ENCODE measurements at regions of chr1 and their contacts with region 1.

Region 1: DNA sequence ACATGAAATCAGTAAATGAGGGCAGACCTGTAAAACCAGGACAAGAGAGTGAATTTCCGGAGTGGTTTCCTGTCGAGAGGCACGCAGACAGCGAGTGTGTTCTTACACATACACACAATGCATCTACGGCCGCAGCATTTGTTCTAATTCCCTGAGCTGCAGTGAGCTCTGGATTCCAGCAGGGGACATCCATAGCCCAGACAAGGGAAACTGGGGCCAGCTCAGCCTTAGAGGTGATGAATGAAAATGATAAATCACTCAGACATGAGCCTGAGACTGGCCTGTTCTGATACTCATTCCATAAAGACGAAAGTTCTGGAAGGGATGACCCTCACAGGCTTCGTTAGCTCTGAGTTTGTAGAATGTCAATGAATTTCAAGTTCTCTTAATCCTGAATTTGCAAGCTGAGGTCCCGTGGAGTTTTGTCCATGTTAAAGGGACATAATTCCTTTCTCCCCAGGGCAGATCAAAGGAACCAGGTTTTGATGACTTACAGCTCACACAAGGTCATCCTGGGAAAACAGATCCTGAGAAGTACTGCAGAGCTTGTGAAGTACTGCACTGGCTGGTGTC is 207.9 kb upstream of the C1orf87 start:
- DNase-seq: no peak
- H3K4me3 ChIP-seq: no peak overlapping the region
- H3K27ac ChIP-seq: no peak overlapping the region
- H3K27me3 ChIP-seq: no peaks in the 10 kb centered on the region
- CTCF ChIP-seq: peak; percentile 87

Region 2: DNA sequence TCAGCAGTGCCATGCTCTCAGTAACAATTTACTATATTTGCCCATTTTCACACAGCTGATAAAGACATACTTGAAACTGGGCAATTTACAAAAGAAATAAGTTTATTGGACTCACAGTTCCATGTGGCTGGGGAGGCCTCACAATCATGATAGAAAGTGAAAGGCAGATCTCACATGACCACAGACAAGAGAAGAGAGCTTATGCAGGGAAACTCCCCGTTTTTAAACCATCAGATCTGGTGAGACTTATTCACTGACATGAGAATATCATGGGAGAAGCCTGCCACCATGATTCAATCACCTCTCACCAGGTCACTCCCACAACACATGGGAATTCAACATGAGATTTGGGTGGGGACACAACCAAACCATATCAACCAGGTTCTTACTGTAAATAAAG is 95.8 kb before region 1 on chr1:
- CTCF ChIA-PET with region 1: no interaction called
- POLR2A ChIA-PET with region 1: no interaction called
- DNase-seq: no peak
- H3K4me3 ChIP-seq: no peak overlapping the region
- H3K27ac ChIP-seq: no peak overlapping the region
- H3K27me3 ChIP-seq: no peaks in the 10 kb centered on the region
- CTCF ChIP-seq: no peak

Region 3: DNA sequence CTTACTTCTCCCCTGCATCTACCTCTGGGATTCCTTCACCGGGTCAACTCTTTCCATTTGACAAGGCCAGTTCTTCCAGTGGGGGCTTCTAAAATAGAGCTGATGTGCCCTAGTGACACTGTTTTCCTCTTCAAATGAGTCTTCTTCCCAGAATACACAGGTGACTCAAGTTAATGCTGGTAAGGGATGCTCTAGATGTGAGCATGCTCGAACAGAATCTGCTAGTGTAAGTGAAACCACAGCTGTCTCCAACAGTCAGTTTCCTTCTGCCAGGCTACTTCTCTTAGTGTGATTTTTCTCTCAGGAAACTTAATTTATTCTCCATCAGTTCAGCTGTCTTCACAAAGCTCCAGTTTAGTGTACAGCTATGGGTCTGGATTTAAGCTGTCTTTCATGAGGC is 13.0 kb before region 1 on chr1:
- CTCF ChIA-PET with region 1: interaction called, 29 read pairs
- POLR2A ChIA-PET with region 1: no interaction called
- DNase-seq: no peak
- H3K4me3 ChIP-seq: no peak overlapping the region
- H3K27ac ChIP-seq: no peak overlapping the region
- H3K27me3 ChIP-seq: no peaks in the 10 kb centered on the region
- CTCF ChIP-seq: no peak

Region 4: DNA sequence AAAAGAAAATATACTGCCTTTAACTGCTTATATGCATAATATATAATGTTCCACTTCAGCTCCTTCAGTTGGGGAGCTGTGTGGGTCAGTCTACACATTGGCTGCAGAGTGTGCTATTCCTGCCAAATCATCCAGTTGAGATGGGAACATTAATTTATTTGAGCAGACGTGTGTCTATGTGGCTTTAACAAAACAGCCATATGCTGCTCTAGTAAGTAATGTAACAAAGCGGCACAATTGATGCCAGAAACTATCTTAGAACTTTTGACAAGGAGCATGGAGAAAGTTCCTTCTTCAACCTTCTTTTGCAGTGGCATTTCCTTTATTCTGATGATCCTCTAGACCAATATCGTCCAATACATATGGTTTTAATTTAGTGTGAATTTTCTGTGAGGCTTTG is 78.0 kb after region 1 on chr1:
- CTCF ChIA-PET with region 1: no interaction called
- POLR2A ChIA-PET with region 1: no interaction called
- DNase-seq: no peak
- H3K4me3 ChIP-seq: no peak overlapping the region
- H3K27ac ChIP-seq: no peak overlapping the region
- H3K27me3 ChIP-seq: no peaks in the 10 kb centered on the region
- CTCF ChIP-seq: no peak

Region 5: DNA sequence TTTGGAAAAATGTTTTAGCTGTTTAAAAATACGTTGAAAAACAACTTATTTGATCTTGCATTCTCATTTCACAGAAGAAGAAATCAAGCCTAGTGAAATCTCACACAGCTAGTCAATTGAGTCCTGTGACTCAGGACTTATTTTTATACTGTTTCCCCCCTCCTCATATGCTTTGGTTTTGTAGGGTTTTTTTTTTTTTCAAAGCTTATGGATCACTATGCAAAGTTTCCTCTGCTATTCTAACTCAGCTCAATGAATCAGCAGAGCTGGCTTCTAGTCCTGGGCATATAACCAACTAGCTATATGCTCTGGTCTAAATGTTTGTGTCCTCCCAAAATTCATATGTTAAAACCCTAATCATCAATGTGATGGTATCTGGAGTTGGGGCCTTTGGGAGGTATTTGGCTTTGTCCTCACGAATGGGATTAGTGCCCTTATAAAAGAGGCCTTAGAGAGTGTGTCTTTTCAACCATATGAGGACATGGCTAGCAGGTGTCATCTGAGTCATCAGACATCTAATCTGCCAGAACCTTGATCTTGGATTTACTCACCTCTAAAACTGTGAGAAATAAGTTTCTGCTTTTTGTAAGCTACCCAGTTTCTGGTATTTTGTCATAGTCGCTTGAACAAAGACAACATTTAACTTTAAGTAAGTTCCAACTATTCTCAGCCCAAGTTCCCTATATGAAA is 109.3 kb after region 1 on chr1:
- CTCF ChIA-PET with region 1: no interaction called
- POLR2A ChIA-PET with region 1: no interaction called
- DNase-seq: no peak
- H3K4me3 ChIP-seq: no peak overlapping the region
- H3K27ac ChIP-seq: no peak overlapping the region
- H3K27me3 ChIP-seq: no peaks in the 10 kb centered on the region
- CTCF ChIP-seq: no peak

Region 6: GRCh38 chr1:60765204-60765603 is 483.8 kb after region 1 on chr1:
- CTCF ChIA-PET with region 1: interaction called, 13 read pairs
- POLR2A ChIA-PET with region 1: no interaction called
- DNase-seq: no peak
- H3K4me3 ChIP-seq: no peak overlapping the region
- H3K27ac ChIP-seq: no peak overlapping the region
- H3K27me3 ChIP-seq: no peaks in the 10 kb centered on the region
- CTCF ChIP-seq: peak; percentile 47

Region 7: DNA sequence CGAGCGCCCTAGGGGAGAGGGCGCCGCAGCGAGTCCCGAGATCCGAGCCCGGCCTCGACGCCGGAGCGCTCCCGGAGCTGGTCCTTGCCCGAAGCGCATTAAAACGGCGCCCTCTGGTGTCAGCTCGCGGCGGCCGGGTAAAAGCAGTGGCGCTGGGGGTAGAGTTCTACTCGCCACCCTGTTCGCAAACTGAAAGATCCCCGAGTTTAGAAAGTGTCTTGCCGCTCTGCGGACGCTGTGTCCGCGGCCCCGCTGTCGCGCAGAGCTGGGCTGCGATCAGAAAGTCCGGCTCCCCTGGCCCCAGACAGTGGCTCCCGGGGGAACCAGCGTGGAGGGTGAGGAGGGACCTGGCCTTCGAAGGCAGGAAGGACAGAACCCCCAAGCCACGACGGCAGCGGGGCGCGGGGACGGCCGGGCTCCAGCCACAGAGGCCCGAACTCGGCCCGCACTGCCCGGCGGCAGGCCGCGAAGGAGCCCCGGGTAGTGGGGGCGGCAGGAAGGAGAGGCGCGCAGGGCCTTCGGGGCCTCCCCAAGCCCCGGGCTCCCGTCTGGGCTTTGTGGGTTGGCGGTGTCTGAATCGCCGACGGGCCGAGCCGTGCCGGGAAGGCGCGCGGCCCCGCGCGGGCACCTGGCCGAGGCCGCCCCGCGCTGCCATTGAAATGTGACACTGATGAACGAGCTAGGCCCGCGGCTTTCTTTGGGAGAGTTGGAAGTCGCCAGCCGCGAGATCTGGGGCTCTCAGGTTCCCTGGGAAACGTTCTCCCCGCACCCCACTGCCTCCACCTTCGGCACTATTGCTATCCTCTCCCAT is 761.8 kb after region 1 on chr1:
- CTCF ChIA-PET with region 1: interaction called, 13 read pairs
- POLR2A ChIA-PET with region 1: no interaction called
- DNase-seq: peak; percentile 23
- H3K4me3 ChIP-seq: peak overlapping the region; percentile 47
- H3K27ac ChIP-seq: no peak overlapping the region
- H3K27me3 ChIP-seq: peaks cover 25% of the 10 kb centered on the region
- CTCF ChIP-seq: peak; percentile 81